RWPE1 (cell line): ENCODE measurements at regions of chr2 and their contacts with region 1.

Region 1: GRCh38 chr2:72150157-72150865 is 2.6 kb upstream of the CYP26B1 start:
- DNase-seq: peak; percentile 76
- H3K27ac ChIP-seq: no peak overlapping the region
- CTCF ChIP-seq: peak; percentile 80

Region 2: DNA sequence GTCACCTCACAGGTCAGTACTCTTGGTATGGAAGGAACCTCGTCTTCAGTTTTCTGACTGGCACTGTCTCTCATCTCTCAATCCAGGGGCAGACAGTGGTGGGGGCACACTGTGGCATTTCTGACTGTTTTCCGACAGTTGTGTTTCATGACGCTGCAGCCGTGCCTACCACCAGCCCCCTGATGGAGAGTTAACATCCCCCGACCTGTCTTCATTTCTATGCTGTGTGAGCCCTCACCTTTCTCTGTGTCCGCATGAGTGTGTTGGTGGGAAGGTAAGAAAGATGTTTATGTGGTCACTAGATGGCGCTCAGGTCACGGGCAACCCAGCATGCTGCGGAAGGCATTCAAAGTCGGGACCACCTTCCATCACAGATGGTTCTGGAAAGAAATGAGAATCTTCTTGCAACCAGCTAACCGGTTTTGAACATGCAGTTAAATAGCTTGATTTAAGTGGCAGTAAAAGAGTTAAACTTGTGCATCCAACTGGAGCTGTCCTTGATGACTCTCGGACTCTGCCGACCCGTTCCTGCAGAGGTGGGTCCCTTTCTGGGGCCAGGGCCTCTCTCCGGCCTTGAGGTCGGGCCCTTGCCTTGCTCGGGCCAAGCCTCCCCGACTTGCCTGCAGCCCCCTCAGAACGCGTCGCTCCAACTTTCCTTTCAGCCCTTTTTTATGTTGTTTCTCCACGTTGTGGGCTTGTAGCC is 604.6 kb before region 1 on chr2:
- CTCF ChIA-PET with region 1: interaction called, 16 read pairs
- POLR2A ChIA-PET with region 1: no interaction called
- DNase-seq: peak; percentile 59
- H3K27ac ChIP-seq: no peak overlapping the region
- CTCF ChIP-seq: peak; percentile 76

Region 3: GRCh38 chr2:71778936-71779773 is 371.2 kb before region 1 on chr2:
- CTCF ChIA-PET with region 1: interaction called, 11 read pairs
- POLR2A ChIA-PET with region 1: no interaction called
- DNase-seq: no peak
- H3K27ac ChIP-seq: no peak overlapping the region
- CTCF ChIP-seq: no peak

Region 4: GRCh38 chr2:71923887-71924533 is 226.3 kb before region 1 on chr2:
- CTCF ChIA-PET with region 1: interaction called, 45 read pairs
- POLR2A ChIA-PET with region 1: no interaction called
- DNase-seq: peak; percentile 76
- H3K27ac ChIP-seq: no peak overlapping the region
- CTCF ChIP-seq: peak; percentile 83

Region 5: DNA sequence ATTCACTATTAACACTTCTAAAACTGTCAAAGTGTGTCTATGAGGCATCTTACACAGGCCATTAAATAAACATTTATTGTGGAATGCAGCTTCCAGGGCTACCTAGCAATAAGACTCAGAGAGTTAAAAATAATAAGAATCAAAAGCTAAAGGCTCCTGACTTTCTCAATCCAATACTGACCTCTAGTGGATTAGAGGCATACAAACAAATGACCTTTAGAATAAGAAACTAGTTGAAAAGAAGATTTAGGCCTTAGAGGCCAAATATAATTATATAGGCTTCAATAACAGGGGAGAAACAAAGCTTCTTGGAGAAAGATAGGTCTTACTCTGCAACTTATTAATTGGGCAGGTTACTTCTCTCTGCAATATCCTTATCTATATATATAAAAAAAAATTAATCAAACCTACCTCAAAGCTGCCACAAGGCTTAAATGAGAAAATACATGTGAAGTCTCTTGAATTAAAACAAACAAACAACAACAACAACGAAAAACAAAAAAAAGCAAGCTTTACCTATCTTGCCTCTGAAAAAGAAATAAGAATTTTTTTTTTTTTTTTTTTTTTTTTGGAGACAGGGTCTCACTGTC is 429.4 kb after region 1 on chr2:
- CTCF ChIA-PET with region 1: interaction called, 17 read pairs
- POLR2A ChIA-PET with region 1: no interaction called
- DNase-seq: peak; percentile 30
- H3K27ac ChIP-seq: no peak overlapping the region
- CTCF ChIP-seq: peak; percentile 66